ENCODE measurements at regions of chr13 and their contacts with region 1.

Region 1: DNA sequence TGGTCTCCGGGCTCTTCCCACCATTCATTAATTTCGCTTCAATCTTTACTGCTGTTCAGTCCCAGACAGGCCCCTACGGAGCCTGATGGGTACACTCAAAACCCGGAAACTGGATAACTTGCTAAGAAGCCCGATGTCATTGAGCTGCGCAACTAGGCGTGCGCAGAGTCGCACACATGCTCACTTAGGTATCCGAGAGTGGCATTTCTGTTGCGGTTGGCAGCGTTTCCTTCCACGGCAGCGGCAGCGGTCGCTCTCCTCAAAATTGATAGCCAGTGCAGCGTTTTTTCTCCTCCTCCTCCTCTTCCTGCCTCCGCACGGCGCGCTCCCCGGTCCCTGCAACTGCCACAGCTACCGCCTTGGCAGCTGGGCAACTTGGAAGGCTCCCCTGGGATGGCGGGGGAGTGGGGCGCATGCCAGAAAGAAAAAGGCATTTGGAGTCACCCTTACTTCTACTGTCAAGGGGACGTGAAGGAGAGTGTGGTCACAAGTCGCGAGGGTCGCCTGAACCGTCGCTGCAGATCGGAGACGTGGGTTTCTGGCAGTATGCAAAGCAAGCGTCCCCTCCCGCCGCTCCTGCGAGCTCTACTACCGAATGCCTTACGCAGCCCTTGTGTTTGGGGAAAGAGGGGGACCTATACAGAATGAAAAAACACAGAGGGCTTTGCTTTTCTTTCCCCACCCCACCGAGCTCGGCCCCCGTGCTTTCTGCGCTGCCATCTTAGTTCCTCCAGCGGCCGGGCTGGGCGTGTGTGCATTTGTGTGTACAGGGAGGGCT is 2.4 kb upstream of the MYCBP2 start:
- DNase-seq: peak; percentile 56 to 95 (median 93)
- ATAC-seq: peak; percentile 77
- H3K4me3 ChIP-seq: peak overlapping the region; percentile 93
- H3K4me3 Mint-ChIP-seq: peak overlapping the region; percentile 84 to 98 (median 94)
- H3K27ac ChIP-seq: peak overlapping the region; percentile 86
- H3K27ac Mint-ChIP-seq: peak overlapping the region; percentile 87 to 98 (median 94)
- H3K4me1 ChIP-seq: peaks cover 24 to 29% of the 10 kb centered on the region in 2 donors
- H3K4me1 Mint-ChIP-seq: peaks cover 16 to 65% (median 48%) of the 10 kb centered on the region in 7 donors
- H3K27me3 ChIP-seq: no peaks in the 10 kb centered on the region
- H3K27me3 Mint-ChIP-seq: peaks cover 0 to 9% (median 0%) of the 10 kb centered on the region in 5 donors

Region 2: DNA sequence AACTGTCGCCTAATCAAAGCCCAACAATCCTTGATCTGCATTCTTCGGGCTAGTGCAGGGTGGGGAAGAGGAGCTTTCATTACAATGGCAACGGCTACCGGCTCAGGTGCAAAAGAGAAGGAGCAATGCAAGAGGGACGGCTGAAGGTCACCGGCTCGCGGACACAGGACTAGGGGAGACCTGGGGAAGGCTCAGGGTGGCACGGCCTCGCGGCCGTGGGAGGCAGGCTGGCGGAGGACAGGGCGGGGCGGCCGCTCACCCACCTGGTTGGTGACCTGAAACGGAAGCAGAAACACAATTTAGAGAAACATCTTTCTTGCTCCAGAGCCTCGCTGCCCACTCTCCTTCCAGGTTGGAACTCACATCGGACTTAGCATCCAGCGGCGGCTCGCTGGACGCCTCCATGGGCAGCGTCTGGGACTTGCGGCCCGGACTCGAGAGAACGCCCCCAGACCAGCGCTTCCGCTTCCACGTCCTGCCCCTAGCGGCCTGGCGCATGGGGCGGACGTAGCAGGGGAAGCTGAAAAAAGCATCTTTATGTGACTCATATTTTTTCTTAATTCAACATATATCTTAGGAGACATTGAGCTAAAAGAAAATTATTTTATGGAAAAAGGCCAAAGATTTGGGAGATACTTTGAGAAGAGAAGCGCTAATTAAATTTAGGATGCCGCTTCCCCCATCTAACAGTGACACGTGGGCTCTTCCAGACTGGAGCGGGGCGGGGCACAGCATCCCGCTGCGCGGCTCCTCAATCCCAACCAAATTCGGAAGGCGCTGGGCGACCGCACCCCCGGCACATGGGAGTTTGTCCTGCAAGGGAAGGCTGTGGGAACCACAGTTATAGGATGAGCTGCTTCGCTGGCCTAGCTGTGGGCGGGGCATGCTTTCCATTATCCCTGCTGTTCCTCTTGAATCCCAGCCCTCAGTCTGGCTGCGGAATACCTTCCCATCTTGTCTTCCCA is 1791.6 kb before region 1 on chr13 and contains the start of gene COMMD6:
- CTCF ChIA-PET with region 1: no interaction called
- POLR2A ChIA-PET with region 1: no interaction called
- intact Hi-C with region 1: loop called (anchors 5 to 10 kb)
- DNase-seq: peak; percentile 46 to 77 (median 65)
- ATAC-seq: peak; percentile 93
- H3K4me3 ChIP-seq: peak within 1 kb of the TSS; percentile 96
- H3K4me3 Mint-ChIP-seq: peak within 1 kb of the TSS; percentile 88 to 100 (median 98)
- H3K27ac ChIP-seq: peak within 1 kb of the TSS; percentile 85
- H3K27ac Mint-ChIP-seq: peak within 1 kb of the TSS; percentile 83 to 98 (median 95)
- H3K4me1 ChIP-seq: peaks cover 12 to 26% of the 10 kb centered on the region in 2 donors
- H3K4me1 Mint-ChIP-seq: peaks cover 28 to 57% (median 45%) of the 10 kb centered on the region in 7 donors
- H3K27me3 ChIP-seq: no peaks in the 10 kb centered on the region
- H3K27me3 Mint-ChIP-seq: no peaks in the 10 kb centered on the region
- total RNA-seq, gene COMMD6: 133 to 241 (median 205) TPM

Region 3: DNA sequence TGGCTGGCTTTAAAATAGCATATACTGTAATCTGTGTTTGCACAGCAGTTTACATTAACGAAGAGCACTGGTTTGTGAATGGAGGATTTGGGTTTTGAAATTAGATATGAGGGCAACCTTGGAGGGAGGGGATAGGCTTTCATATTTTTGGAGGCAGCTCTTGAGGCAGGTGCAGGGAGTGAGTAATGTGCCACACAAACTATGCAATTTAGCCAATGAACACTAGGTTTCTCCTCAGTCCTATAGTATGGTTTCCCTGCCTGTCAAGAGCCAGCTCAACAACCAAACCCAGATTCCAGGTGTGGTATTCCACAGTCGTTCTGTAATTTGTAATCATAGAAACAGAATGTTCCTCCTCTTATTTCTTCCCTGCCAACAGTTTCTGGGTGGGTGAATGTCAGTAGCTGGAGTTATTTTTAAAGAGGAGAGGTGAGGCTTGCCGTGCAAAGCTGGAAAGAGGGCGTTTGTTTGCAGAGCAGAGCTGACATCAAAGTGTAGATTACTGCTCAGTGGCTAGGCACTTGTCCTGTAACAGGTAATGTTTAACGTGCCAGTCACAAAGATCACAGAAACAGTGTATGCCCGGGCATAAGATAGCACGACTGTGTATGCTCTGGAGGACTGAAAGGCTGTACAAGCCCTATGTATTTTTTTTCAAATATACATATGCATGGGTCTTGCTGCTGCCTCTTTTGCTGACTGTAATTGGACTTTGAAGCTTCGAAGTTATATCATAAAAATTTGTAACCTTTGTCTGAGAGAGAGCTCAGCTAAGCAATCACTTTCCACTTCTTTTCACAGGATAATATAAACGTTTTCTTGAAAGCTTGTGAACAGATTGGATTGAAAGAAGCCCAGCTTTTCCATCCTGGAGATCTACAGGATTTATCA is 1568.9 kb before region 1 on chr13:
- CTCF ChIA-PET with region 1: no interaction called
- POLR2A ChIA-PET with region 1: interaction called, 6 read pairs
- intact Hi-C with region 1: loop called (anchors 1 to 5 kb)
- DNase-seq: peak in 7 of 9 donors; percentile 29 to 60 (median 46)
- ATAC-seq: peak; percentile 75
- H3K4me3 ChIP-seq: peak overlapping the region; percentile 65
- H3K4me3 Mint-ChIP-seq: peak overlapping the region; percentile 79 to 96 (median 92)
- H3K27ac ChIP-seq: peak overlapping the region; percentile 78
- H3K27ac Mint-ChIP-seq: peak overlapping the region; percentile 86 to 99 (median 96)
- H3K4me1 ChIP-seq: peaks cover 30 to 32% of the 10 kb centered on the region in 2 donors
- H3K4me1 Mint-ChIP-seq: peaks cover 37 to 72% (median 68%) of the 10 kb centered on the region in 7 donors
- H3K27me3 ChIP-seq: no peaks in the 10 kb centered on the region
- H3K27me3 Mint-ChIP-seq: no peaks in the 10 kb centered on the region

Region 4: DNA sequence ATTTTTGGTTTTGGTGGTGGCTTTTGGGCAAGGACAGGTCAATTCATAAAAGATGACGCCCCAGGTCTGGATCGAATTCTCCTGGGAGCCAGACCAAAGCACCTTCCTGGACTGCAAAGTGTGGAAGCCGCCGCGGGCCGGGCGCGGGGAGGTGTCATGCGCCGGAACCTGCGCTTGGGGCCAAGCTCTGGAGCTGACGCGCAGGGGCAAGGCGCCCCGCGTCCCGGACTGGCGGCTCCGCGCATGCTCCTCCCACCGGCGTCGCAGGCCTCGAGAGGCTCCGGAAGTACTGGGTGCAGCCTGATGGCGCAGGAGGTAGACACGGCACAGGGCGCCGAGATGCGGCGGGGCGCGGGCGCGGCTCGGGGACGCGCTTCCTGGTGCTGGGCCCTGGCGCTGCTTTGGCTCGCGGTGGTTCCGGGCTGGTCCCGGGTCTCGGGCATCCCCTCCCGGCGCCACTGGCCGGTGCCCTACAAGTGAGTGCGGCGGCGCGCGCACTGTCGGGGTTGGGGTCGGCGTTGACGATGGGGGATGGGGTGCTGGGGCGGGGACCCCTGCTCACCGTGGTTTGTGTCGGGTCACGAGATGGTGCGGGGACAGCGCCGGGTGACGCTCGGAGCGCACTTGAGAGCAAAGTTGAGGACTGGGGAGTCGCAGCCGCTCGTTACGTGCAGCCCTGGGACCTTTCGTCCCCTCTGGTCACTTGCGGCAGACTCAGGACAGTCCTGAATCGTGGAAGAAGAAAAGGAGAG is 337.4 kb before region 1 on chr13 and contains the start of gene CLN5:
- CTCF ChIA-PET with region 1: no interaction called
- POLR2A ChIA-PET with region 1: interaction called, 6 read pairs
- intact Hi-C with region 1: loop called (anchors 1 kb)
- DNase-seq: peak; percentile 93 to 98 (median 96)
- ATAC-seq: peak; percentile 92
- H3K4me3 ChIP-seq: peak within 1 kb of the TSS; percentile 87
- H3K4me3 Mint-ChIP-seq: peak within 1 kb of the TSS; percentile 88 to 99 (median 96)
- H3K27ac ChIP-seq: peak within 1 kb of the TSS; percentile 96
- H3K27ac Mint-ChIP-seq: peak within 1 kb of the TSS; percentile 96 to 99 (median 99)
- H3K4me1 ChIP-seq: peaks cover 12 to 19% of the 10 kb centered on the region in 2 donors
- H3K4me1 Mint-ChIP-seq: peaks cover 27 to 59% (median 53%) of the 10 kb centered on the region in 7 donors
- H3K27me3 ChIP-seq: peaks cover 0 to 3% of the 10 kb centered on the region in 2 donors
- H3K27me3 Mint-ChIP-seq: peaks cover 0 to 12% (median 0%) of the 10 kb centered on the region in 5 donors
- total RNA-seq, gene CLN5: 18.9 to 45.3 (median 27.7) TPM

Region 5: DNA sequence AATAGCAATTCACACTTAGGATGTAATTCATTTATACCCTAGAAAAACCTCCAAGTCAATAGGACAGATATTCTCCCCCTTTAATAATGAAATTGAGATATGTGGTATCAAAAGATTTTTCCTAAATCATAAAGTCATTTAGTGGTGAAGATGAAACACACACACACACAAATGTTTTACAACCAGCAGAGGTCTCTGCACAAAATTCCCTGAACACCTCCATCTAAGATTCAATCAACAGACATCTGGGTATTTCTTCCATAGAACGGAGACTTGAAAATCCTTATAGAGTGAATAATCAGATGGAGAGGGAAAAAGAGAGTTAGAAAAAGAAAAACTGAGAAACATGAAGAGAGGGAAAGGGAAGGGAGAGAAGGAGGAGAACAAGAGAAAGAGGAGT is 55.2 kb before region 1 on chr13:
- CTCF ChIA-PET with region 1: interaction called, 5 read pairs
- POLR2A ChIA-PET with region 1: interaction called, 5 read pairs
- intact Hi-C with region 1: loop called in 1 of 2 experiments (anchors 1 kb)
- DNase-seq: peak in 1 of 9 donors; percentile 6
- ATAC-seq: no peak
- H3K4me3 ChIP-seq: no peak overlapping the region
- H3K4me3 Mint-ChIP-seq: no peak overlapping the region
- H3K27ac ChIP-seq: no peak overlapping the region
- H3K27ac Mint-ChIP-seq: peak overlapping the region in 2 of 9 donors; percentile 19 to 73
- H3K4me1 ChIP-seq: no peaks in the 10 kb centered on the region
- H3K4me1 Mint-ChIP-seq: peaks cover 0 to 36% (median 18%) of the 10 kb centered on the region in 7 donors
- H3K27me3 ChIP-seq: no peaks in the 10 kb centered on the region
- H3K27me3 Mint-ChIP-seq: no peaks in the 10 kb centered on the region

Region 6: GRCh38 chr13:77390391-77390790 is 61.1 kb after region 1 on chr13:
- CTCF ChIA-PET with region 1: no interaction called
- POLR2A ChIA-PET with region 1: no interaction called
- intact Hi-C with region 1: loop called in 1 of 2 experiments (anchors 5 kb)
- DNase-seq: no peak
- ATAC-seq: no peak
- H3K4me3 ChIP-seq: no peak overlapping the region
- H3K4me3 Mint-ChIP-seq: no peak overlapping the region
- H3K27ac ChIP-seq: no peak overlapping the region
- H3K27ac Mint-ChIP-seq: no peak overlapping the region
- H3K4me1 ChIP-seq: no peaks in the 10 kb centered on the region
- H3K4me1 Mint-ChIP-seq: peaks cover 12 to 26% (median 19%) of the 10 kb centered on the region in 7 donors
- H3K27me3 ChIP-seq: no peaks in the 10 kb centered on the region
- H3K27me3 Mint-ChIP-seq: peaks cover 0 to 23% (median 0%) of the 10 kb centered on the region in 5 donors

Region 7: GRCh38 chr13:77751513-77752456 is 422.5 kb after region 1 on chr13:
- CTCF ChIA-PET with region 1: no interaction called
- POLR2A ChIA-PET with region 1: no interaction called
- intact Hi-C with region 1: loop called (anchors 1 to 5 kb)
- DNase-seq: peak in 7 of 9 donors; percentile 22 to 63 (median 56)
- ATAC-seq: peak; percentile 86
- H3K4me3 ChIP-seq: no peak overlapping the region
- H3K4me3 Mint-ChIP-seq: no peak overlapping the region
- H3K27ac ChIP-seq: no peak overlapping the region
- H3K27ac Mint-ChIP-seq: peak overlapping the region in 3 of 9 donors; percentile 10 to 77 (median 43)
- H3K4me1 ChIP-seq: peaks cover 0 to 4% of the 10 kb centered on the region in 2 donors
- H3K4me1 Mint-ChIP-seq: peaks cover 9 to 34% (median 18%) of the 10 kb centered on the region in 7 donors
- H3K27me3 ChIP-seq: no peaks in the 10 kb centered on the region
- H3K27me3 Mint-ChIP-seq: no peaks in the 10 kb centered on the region

Region 8: GRCh38 chr13:78409172-78409571 is 1079.8 kb after region 1 on chr13:
- CTCF ChIA-PET with region 1: no interaction called
- POLR2A ChIA-PET with region 1: no interaction called
- intact Hi-C with region 1: no loop called
- DNase-seq: no peak
- ATAC-seq: no peak
- H3K4me3 ChIP-seq: no peak overlapping the region
- H3K4me3 Mint-ChIP-seq: no peak overlapping the region
- H3K27ac ChIP-seq: no peak overlapping the region
- H3K27ac Mint-ChIP-seq: no peak overlapping the region
- H3K4me1 ChIP-seq: no peaks in the 10 kb centered on the region
- H3K4me1 Mint-ChIP-seq: no peaks in the 10 kb centered on the region
- H3K27me3 ChIP-seq: no peaks in the 10 kb centered on the region
- H3K27me3 Mint-ChIP-seq: peaks cover 0 to 28% (median 22%) of the 10 kb centered on the region in 5 donors